ENCODE measurements at regions of chrX and their contacts with region 1.

Region 1: GRCh38 chrX:2707334-2707760 is 16.3 kb downstream of the CD99 start:
- DNase-seq: peak in 13 of 14 experiments; percentile 28 to 80 (median 46)
- ATAC-seq: peak; percentile 28
- H3K4me3 ChIP-seq: no peak overlapping the region
- H3K4me3 Mint-ChIP-seq: peak overlapping the region; percentile 20
- H3K27ac ChIP-seq: peak overlapping the region in 1 of 2 donors; percentile 24
- H3K27ac Mint-ChIP-seq: peak overlapping the region; percentile 85
- H3K4me1 ChIP-seq: peaks cover 78% of the 10 kb centered on the region
- H3K4me1 Mint-ChIP-seq: peaks cover 74% of the 10 kb centered on the region
- H3K27me3 ChIP-seq: no peaks in the 10 kb centered on the region
- H3K27me3 Mint-ChIP-seq: no peaks in the 10 kb centered on the region
- CTCF ChIP-seq: no peak

Region 2: GRCh38 chrX:2647627-2648026 is 59.7 kb before region 1 on chrX:
- CTCF ChIA-PET with region 1: no interaction called
- POLR2A ChIA-PET with region 1: no interaction called
- intact Hi-C with region 1: loop called in 1 of 2 experiments (anchors 5 kb)
- DNase-seq: no peak
- ATAC-seq: no peak
- H3K4me3 ChIP-seq: no peak overlapping the region
- H3K4me3 Mint-ChIP-seq: no peak overlapping the region
- H3K27ac ChIP-seq: no peak overlapping the region
- H3K27ac Mint-ChIP-seq: no peak overlapping the region
- H3K4me1 ChIP-seq: no peaks in the 10 kb centered on the region
- H3K4me1 Mint-ChIP-seq: no peaks in the 10 kb centered on the region
- H3K27me3 ChIP-seq: no peaks in the 10 kb centered on the region
- H3K27me3 Mint-ChIP-seq: no peaks in the 10 kb centered on the region
- CTCF ChIP-seq: no peak

Region 3: GRCh38 chrX:2696698-2697215 is 10.6 kb before region 1 on chrX:
- CTCF ChIA-PET with region 1: no interaction called
- POLR2A ChIA-PET with region 1: no interaction called
- intact Hi-C with region 1: loop called (anchors 1 to 2 kb)
- DNase-seq: peak in 9 of 14 experiments; percentile 20 to 88 (median 51)
- ATAC-seq: peak; percentile 75
- H3K4me3 ChIP-seq: peak overlapping the region; percentile 24
- H3K4me3 Mint-ChIP-seq: peak overlapping the region; percentile 82
- H3K27ac ChIP-seq: peak overlapping the region; percentile 39 to 55
- H3K27ac Mint-ChIP-seq: peak overlapping the region; percentile 83
- H3K4me1 ChIP-seq: peaks cover 95% of the 10 kb centered on the region
- H3K4me1 Mint-ChIP-seq: peaks cover 96% of the 10 kb centered on the region
- H3K27me3 ChIP-seq: no peaks in the 10 kb centered on the region
- H3K27me3 Mint-ChIP-seq: no peaks in the 10 kb centered on the region
- CTCF ChIP-seq: no peak